Activated B cell treated with CpG ODN at 0.5 μM for 24 hours (primary cell): ENCODE measurements at regions of chr12 and their contacts with region 1.

Region 1: GRCh38 chr12:1939801-1940607 is 21.6 kb upstream of the CACNA2D4 start:
- DNase-seq: peak; percentile 83
- ATAC-seq: peak; percentile 99
- H3K4me3 Mint-ChIP-seq: no peak overlapping the region
- H3K27ac Mint-ChIP-seq: peak overlapping the region; percentile 41
- H3K4me1 Mint-ChIP-seq: peaks cover 6% of the 10 kb centered on the region
- H3K27me3 Mint-ChIP-seq: no peaks in the 10 kb centered on the region
- CTCF ChIP-seq: no peak

Region 2: GRCh38 chr12:1117970-1118563 is 821.9 kb before region 1 on chr12:
- CTCF ChIA-PET with region 1: interaction called, 4 read pairs
- POLR2A ChIA-PET with region 1: no interaction called
- intact Hi-C with region 1: loop called (anchors 10 kb)
- DNase-seq: peak; percentile 40
- ATAC-seq: peak; percentile 81
- H3K4me3 Mint-ChIP-seq: no peak overlapping the region
- H3K27ac Mint-ChIP-seq: no peak overlapping the region
- H3K4me1 Mint-ChIP-seq: peaks cover 2% of the 10 kb centered on the region
- H3K27me3 Mint-ChIP-seq: no peaks in the 10 kb centered on the region
- CTCF ChIP-seq: peak; percentile 42

Region 3: DNA sequence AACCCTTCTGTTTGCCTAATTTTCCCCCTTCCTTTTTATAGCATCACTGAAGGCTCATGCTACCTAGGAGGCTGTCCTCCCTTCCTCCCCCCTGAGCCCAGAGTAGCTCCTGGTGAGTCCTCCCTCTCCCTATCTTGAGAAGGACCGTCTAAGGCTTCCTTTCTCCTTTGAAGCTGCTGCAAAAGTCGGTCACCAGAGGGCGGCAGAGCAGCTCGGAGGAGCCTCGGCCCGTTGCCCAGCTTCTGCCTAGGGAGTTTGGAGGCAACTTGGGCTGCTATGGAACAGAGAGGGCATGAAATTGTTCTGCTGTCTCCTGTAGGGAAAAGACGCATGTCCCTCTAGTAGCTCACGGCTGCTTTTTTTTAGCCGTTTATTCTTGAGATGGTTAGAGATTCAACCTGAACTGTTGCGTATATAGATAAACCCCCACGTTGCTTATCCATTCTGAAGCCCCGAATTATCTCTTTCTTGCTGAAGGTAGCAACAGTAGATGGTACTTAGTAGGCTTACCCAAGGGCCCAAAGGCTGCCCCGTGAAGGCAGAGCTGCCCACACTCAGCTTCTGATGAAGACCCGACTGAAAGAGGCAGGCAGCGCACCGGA is 305.3 kb before region 1 on chr12:
- CTCF ChIA-PET with region 1: interaction called, 22 read pairs
- POLR2A ChIA-PET with region 1: no interaction called
- intact Hi-C with region 1: loop called (anchors 1 kb)
- DNase-seq: peak; percentile 33
- ATAC-seq: peak; percentile 57
- H3K4me3 Mint-ChIP-seq: no peak overlapping the region
- H3K27ac Mint-ChIP-seq: no peak overlapping the region
- H3K4me1 Mint-ChIP-seq: peaks cover 17% of the 10 kb centered on the region
- H3K27me3 Mint-ChIP-seq: peaks cover 26% of the 10 kb centered on the region
- CTCF ChIP-seq: no peak

Region 4: DNA sequence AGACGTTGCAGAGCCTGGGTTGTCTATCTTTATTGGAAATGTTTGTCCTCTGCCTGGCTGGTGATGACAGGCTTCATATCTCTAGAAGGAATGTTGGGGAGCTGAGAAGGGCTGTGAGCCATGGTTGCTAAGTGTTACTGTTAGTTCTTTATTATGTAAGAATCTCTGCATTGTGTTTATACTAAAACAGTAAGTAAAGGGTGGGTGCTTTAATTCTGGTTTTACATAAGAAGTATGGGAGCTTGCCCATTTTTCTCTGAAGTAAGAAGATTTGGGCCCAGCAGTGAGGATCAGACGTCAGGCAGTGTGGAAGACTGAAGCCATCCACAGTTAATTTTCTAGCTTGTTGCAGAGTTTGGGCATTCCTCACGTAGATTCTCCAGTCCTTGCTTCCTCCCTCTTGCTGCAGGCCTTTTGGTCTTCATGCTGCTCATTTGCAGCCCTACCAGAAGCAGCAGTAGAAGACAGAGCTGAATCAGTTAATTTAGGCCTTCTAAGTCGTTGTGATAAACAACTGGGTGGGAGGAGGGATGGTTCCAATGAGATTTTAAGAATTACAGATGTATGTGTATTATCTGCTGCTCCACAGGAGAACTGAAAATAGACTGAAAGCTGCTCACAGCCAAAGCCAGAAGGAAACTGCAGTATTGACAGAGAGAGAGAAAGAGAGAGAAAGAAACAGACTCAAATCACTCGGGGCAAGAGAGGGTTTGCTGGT is 289.6 kb before region 1 on chr12:
- CTCF ChIA-PET with region 1: interaction called, 65 read pairs
- POLR2A ChIA-PET with region 1: no interaction called
- intact Hi-C with region 1: loop called (anchors 1 kb)
- DNase-seq: no peak
- ATAC-seq: no peak
- H3K4me3 Mint-ChIP-seq: no peak overlapping the region
- H3K27ac Mint-ChIP-seq: no peak overlapping the region
- H3K4me1 Mint-ChIP-seq: peaks cover 18% of the 10 kb centered on the region
- H3K27me3 Mint-ChIP-seq: peaks cover 16% of the 10 kb centered on the region
- CTCF ChIP-seq: no peak

Region 5: GRCh38 chr12:1917172-1918065 is 22.6 kb before region 1 on chr12:
- CTCF ChIA-PET with region 1: interaction called, 10 read pairs
- POLR2A ChIA-PET with region 1: interaction called, 4 read pairs
- intact Hi-C with region 1: no loop called
- DNase-seq: no peak
- ATAC-seq: peak; percentile 64
- H3K4me3 Mint-ChIP-seq: peak overlapping the region; percentile 86
- H3K27ac Mint-ChIP-seq: peak overlapping the region; percentile 87
- H3K4me1 Mint-ChIP-seq: peaks cover 42% of the 10 kb centered on the region
- H3K27me3 Mint-ChIP-seq: peaks cover 9% of the 10 kb centered on the region
- CTCF ChIP-seq: no peak

Region 6: GRCh38 chr12:1924996-1925683 is 14.9 kb before region 1 on chr12:
- CTCF ChIA-PET with region 1: interaction called, 18 read pairs
- POLR2A ChIA-PET with region 1: interaction called, 4 read pairs
- intact Hi-C with region 1: no loop called
- DNase-seq: no peak
- ATAC-seq: peak; percentile 41
- H3K4me3 Mint-ChIP-seq: peak overlapping the region; percentile 76
- H3K27ac Mint-ChIP-seq: peak overlapping the region; percentile 91
- H3K4me1 Mint-ChIP-seq: peaks cover 63% of the 10 kb centered on the region
- H3K27me3 Mint-ChIP-seq: no peaks in the 10 kb centered on the region
- CTCF ChIP-seq: no peak

Region 7: GRCh38 chr12:2034633-2035430 is 94.8 kb after region 1 on chr12:
- CTCF ChIA-PET with region 1: interaction called, 3 read pairs
- POLR2A ChIA-PET with region 1: no interaction called
- intact Hi-C with region 1: loop called (anchors 1 kb)
- DNase-seq: peak; percentile 79
- ATAC-seq: peak; percentile 100
- H3K4me3 Mint-ChIP-seq: peak overlapping the region; percentile 70
- H3K27ac Mint-ChIP-seq: no peak overlapping the region
- H3K4me1 Mint-ChIP-seq: peaks cover 10% of the 10 kb centered on the region
- H3K27me3 Mint-ChIP-seq: peaks cover 69% of the 10 kb centered on the region
- CTCF ChIP-seq: no peak